CD4-positive, alpha-beta T cell (primary cell): ENCODE measurements at regions of chr12 and their contacts with region 1.

Region 1: GRCh38 chr12:6335451-6336078 is 6.3 kb downstream of the TNFRSF1A start:
- DNase-seq: peak; percentile 68 to 92 (median 82)
- ATAC-seq: peak; percentile 77
- H3K4me3 ChIP-seq: peak overlapping the region; percentile 100
- H3K4me3 Mint-ChIP-seq: no peak overlapping the region
- H3K27ac ChIP-seq: peak overlapping the region; percentile 80 to 90
- H3K27ac Mint-ChIP-seq: no peak overlapping the region
- H3K4me1 ChIP-seq: peaks cover 86% of the 10 kb centered on the region
- H3K4me1 Mint-ChIP-seq: peaks cover 8% of the 10 kb centered on the region
- H3K27me3 ChIP-seq: no peaks in the 10 kb centered on the region
- H3K27me3 Mint-ChIP-seq: no peaks in the 10 kb centered on the region
- CTCF ChIP-seq: peak; percentile 76

Region 2: GRCh38 chr12:6323340-6323994 is 12.1 kb before region 1 on chr12:
- CTCF ChIA-PET with region 1: interaction called, 30 read pairs
- POLR2A ChIA-PET with region 1: interaction called, 16 read pairs
- intact Hi-C with region 1: loop called in 1 of 2 experiments (anchors 2 kb)
- DNase-seq: peak in 7 of 14 experiments; percentile 18 to 83 (median 63)
- ATAC-seq: peak; percentile 89
- H3K4me3 ChIP-seq: peak overlapping the region; percentile 12
- H3K4me3 Mint-ChIP-seq: peak overlapping the region; percentile 86
- H3K27ac ChIP-seq: peak overlapping the region; percentile 12 to 13
- H3K27ac Mint-ChIP-seq: peak overlapping the region; percentile 85
- H3K4me1 ChIP-seq: peaks cover 45% of the 10 kb centered on the region
- H3K4me1 Mint-ChIP-seq: peaks cover 60% of the 10 kb centered on the region
- H3K27me3 ChIP-seq: no peaks in the 10 kb centered on the region
- H3K27me3 Mint-ChIP-seq: no peaks in the 10 kb centered on the region
- CTCF ChIP-seq: peak; percentile 72

Region 3: DNA sequence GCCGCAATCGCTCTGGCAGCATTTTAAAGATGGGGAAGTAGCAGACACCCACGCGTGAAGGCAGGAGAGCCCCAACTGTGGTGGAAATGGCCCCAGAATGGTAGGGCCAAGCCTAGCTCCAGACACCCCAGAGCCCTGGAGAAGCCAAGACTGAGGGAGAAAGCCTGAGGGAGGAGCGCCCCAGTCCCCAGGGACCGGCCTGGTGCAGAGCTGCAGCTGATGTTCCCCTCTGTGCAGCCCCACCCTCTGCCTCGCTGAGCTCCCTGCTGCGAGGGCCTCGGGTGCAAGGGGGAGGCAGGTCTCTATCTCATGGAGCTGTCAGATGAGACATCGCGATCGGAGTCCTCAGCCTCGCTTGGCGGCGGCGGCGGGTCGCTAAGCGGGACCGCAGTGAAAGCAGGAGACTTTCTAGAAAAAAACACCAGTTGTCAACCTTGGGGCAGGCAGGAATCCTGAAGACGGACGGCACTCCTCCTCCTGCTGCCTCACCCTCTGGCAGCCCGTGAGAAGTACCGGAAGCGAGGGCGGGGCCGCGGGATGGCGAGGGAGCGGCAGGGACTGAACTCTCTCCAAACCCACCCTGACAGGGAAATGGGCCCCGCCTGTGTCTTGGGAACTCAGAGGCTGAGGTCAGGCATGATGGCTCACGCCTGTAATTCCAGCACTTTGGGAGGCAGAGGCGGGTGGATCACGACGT is 204.8 kb after region 1 on chr12:
- CTCF ChIA-PET with region 1: interaction called, 3 read pairs
- POLR2A ChIA-PET with region 1: interaction called, 9 read pairs
- intact Hi-C with region 1: loop called (anchors 2 kb)
- DNase-seq: peak in 10 of 14 experiments; percentile 33 to 67 (median 54)
- ATAC-seq: peak; percentile 37
- H3K4me3 ChIP-seq: peak overlapping the region; percentile 26
- H3K4me3 Mint-ChIP-seq: peak overlapping the region; percentile 84
- H3K27ac ChIP-seq: no peak overlapping the region
- H3K27ac Mint-ChIP-seq: peak overlapping the region; percentile 90
- H3K4me1 ChIP-seq: peaks cover 72% of the 10 kb centered on the region
- H3K4me1 Mint-ChIP-seq: peaks cover 59% of the 10 kb centered on the region
- H3K27me3 ChIP-seq: no peaks in the 10 kb centered on the region
- H3K27me3 Mint-ChIP-seq: no peaks in the 10 kb centered on the region
- CTCF ChIP-seq: no peak